HepG2 (cell line): ENCODE measurements at regions of chr7 and their contacts with region 1.

Region 1: GRCh38 chr7:48760528-48761265 is 163.7 kb upstream of the CDC14C start:
- DNase-seq: no peak
- ATAC-seq: no peak
- H3K4me3 ChIP-seq: no peak overlapping the region
- H3K27ac ChIP-seq: no peak overlapping the region
- H3K4me1 ChIP-seq: no peaks in the 10 kb centered on the region
- H3K27me3 ChIP-seq: no peaks in the 10 kb centered on the region
- CTCF ChIP-seq: no peak
- EP300 ChIP-seq: no peak
- POLR2A ChIP-seq: no peak
- RAD21 ChIP-seq: no peak

Region 2: GRCh38 chr7:48718731-48719387 is 41.8 kb before region 1 on chr7:
- CTCF ChIA-PET with region 1: no interaction called
- POLR2A ChIA-PET with region 1: no interaction called
- in situ Hi-C with region 1: no loop called
- intact Hi-C with region 1: loop called (anchors 5 kb)
- DNase-seq: no peak
- ATAC-seq: no peak
- H3K4me3 ChIP-seq: no peak overlapping the region
- H3K27ac ChIP-seq: no peak overlapping the region
- H3K4me1 ChIP-seq: no peaks in the 10 kb centered on the region
- H3K27me3 ChIP-seq: no peaks in the 10 kb centered on the region
- CTCF ChIP-seq: no peak
- EP300 ChIP-seq: no peak
- POLR2A ChIP-seq: no peak
- RAD21 ChIP-seq: no peak